SK-N-SH (cell line): ENCODE measurements at regions of chr9 and their contacts with region 1.

Region 1: DNA sequence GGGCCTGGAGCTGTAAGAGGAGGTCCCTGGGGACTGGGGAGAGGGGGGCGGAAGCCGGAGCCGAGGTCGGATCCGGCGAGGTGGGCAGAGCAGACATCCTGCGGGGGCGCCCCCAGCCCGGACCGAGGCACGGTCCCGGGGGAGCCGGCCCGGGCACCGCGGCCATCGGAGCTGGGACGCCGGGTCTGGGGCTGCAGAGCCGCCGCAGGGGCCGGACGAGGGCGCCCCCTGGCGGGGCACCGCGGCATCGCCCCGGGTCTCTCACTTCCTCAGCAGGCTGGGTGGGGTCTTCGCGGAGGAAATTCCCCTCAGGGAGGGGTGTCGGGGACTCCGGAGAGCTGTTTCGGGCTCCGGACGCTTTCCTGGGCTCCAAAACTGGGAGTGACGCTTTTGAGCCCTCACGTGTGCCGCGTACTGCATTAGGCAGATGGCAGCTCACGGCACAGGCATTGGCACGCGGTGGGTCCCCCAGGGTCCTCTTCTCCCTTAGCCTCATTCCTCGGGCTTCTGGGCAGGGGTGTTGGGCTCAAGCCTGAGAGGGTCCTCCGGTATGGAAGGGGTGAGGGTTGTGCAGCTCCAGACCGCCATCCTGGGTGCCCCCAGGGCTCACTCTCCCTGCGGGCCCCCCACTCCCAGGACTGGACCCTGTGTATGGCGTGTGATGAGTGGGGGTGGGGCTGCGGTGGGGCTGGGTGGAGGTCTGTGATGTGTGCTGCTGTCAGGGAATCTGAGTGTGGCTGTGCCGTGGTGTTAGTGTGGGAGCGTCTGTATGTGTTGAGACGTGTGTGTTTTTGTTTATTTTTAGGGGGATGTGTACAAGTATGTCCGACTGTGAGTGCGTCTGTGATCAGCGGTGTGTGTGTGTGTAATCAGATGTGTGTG is 29.6 kb downstream of the LHX2 start:
- DNase-seq: peak; percentile 93
- H3K4me3 ChIP-seq: peak overlapping the region; percentile 39 to 62
- H3K27ac ChIP-seq: no peak overlapping the region
- H3K4me1 ChIP-seq: peaks cover 0 to 10% of the 10 kb centered on the region in 2 experiments; a peak in 1 of 4 replicates
- H3K27me3 ChIP-seq: peaks cover 34% of the 10 kb centered on the region; the same call in 1 of the 2 replicates
- CTCF ChIP-seq: peak; percentile 93
- EP300 ChIP-seq: no peak
- RAD21 ChIP-seq: peak; percentile 64

Region 2: DNA sequence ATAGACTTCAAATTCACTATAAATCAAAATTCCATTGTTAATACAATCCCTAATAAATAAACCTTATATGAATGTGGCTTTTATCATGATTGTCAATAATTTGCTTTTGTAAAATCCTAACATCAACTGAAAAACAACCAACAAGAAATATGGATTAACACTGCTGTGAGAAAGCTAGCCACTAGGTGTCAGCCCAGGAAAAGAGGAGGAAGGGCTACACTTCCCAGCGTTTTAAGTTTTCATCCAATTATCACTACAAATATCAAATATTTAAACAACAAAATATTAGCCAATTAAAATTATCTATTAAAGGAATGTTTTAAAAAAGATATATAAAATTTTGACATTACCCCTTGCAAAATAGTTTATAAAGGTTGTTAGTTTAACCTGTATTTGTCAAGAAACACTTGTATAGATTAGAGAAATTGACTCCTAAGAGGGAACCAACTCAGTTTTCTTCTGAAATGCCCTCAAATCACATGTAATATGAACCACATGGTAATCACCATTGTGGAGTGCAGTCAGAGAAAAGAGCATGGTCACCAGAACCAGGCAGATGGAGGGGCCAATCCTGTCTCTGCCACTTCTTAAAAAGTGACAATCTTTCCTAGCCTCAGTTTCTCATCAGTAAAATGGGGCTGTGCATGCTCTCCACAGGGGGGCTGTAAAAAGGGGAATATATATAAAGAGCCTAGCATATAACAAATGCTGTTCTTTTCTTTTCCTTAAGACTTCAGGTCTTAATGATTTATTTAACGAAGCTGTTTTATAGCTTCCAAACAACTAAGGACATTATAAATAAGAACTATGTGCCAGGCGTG is 497.0 kb before region 1 on chr9:
- CTCF ChIA-PET with region 1: interaction called, 61 read pairs
- POLR2A ChIA-PET with region 1: no interaction called
- DNase-seq: peak; percentile 64
- H3K4me3 ChIP-seq: peak overlapping the region in 1 of 2 experiments; percentile 36; a peak in 1 of 4 replicates
- H3K27ac ChIP-seq: no peak overlapping the region
- H3K4me1 ChIP-seq: no peaks in the 10 kb centered on the region
- H3K27me3 ChIP-seq: no peaks in the 10 kb centered on the region
- CTCF ChIP-seq: peak; percentile 95
- EP300 ChIP-seq: no peak
- RAD21 ChIP-seq: peak; percentile 98

Region 3: GRCh38 chr9:123912167-123912897 is 128.8 kb before region 1 on chr9:
- CTCF ChIA-PET with region 1: no interaction called
- POLR2A ChIA-PET with region 1: no interaction called
- DNase-seq: no peak
- H3K4me3 ChIP-seq: no peak overlapping the region
- H3K27ac ChIP-seq: no peak overlapping the region
- H3K4me1 ChIP-seq: no peaks in the 10 kb centered on the region
- H3K27me3 ChIP-seq: no peaks in the 10 kb centered on the region
- CTCF ChIP-seq: no peak
- EP300 ChIP-seq: no peak
- RAD21 ChIP-seq: no peak

Region 4: GRCh38 chr9:124011420-124012301 is 29.5 kb before region 1 on chr9 and contains the start of gene LHX2:
- CTCF ChIA-PET with region 1: interaction called, 89 read pairs
- POLR2A ChIA-PET with region 1: no interaction called
- DNase-seq: peak; percentile 90
- H3K4me3 ChIP-seq: peak within 1 kb of the TSS in 1 of 2 experiments; percentile 17; a peak in 2 of 4 replicates
- H3K27ac ChIP-seq: no peak within 1 kb of the TSS
- H3K4me1 ChIP-seq: peaks cover 0 to 9% of the 10 kb centered on the region in 2 experiments; a peak in 1 of 4 replicates
- H3K27me3 ChIP-seq: peaks cover 94% of the 10 kb centered on the region
- CTCF ChIP-seq: no peak; the same call in 1 of the 2 replicates
- EP300 ChIP-seq: no peak
- RAD21 ChIP-seq: no peak
- polyA plus RNA-seq, gene LHX2: not detected in 2 replicates

Region 5: DNA sequence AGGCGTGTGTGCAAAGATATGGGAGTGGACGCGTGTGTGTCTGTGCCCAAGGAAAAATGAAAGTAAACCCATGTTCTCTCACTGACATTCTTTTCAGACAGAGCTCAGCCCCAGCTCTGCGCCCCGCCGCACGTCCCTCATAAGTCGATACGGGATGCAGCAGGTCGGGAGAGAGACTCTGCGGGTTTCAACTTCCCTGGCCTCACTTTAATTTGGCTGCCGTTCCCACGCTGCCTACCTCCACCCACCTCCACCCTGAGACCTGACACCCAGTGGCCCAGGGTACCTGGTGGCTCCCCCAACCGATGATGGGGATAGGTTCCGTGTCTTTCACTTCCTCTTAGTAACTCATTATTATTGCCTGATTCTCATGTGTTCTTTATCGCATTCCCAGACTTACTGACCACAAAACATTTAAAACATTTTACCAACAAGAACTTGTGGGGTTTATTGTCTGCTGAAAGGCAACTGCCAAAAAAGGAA is 10.2 kb before region 1 on chr9:
- CTCF ChIA-PET with region 1: interaction called, 89 read pairs
- POLR2A ChIA-PET with region 1: no interaction called
- DNase-seq: peak; percentile 53
- H3K4me3 ChIP-seq: peak overlapping the region; percentile 40 to 61
- H3K27ac ChIP-seq: no peak overlapping the region
- H3K4me1 ChIP-seq: peaks cover 0 to 6% of the 10 kb centered on the region in 2 experiments; a peak in 1 of 4 replicates
- H3K27me3 ChIP-seq: peaks cover 88% of the 10 kb centered on the region
- CTCF ChIP-seq: no peak
- EP300 ChIP-seq: no peak
- RAD21 ChIP-seq: no peak

Region 6: GRCh38 chr9:124066783-124067563 is 25.8 kb after region 1 on chr9:
- CTCF ChIA-PET with region 1: interaction called, 11 read pairs
- POLR2A ChIA-PET with region 1: no interaction called
- DNase-seq: no peak
- H3K4me3 ChIP-seq: no peak overlapping the region
- H3K27ac ChIP-seq: no peak overlapping the region
- H3K4me1 ChIP-seq: no peaks in the 10 kb centered on the region
- H3K27me3 ChIP-seq: peaks cover 9% of the 10 kb centered on the region; the same call in 1 of the 2 replicates
- CTCF ChIP-seq: no peak
- EP300 ChIP-seq: no peak
- RAD21 ChIP-seq: no peak